Posterior vena cava (tissue), 2 donors: ENCODE measurements at regions of chr5 and their contacts with region 1.

Region 1: GRCh38 chr5:89401659-89402058 is 518.7 kb upstream of the MEF2C start:
- DNase-seq: no peak

Region 2: DNA sequence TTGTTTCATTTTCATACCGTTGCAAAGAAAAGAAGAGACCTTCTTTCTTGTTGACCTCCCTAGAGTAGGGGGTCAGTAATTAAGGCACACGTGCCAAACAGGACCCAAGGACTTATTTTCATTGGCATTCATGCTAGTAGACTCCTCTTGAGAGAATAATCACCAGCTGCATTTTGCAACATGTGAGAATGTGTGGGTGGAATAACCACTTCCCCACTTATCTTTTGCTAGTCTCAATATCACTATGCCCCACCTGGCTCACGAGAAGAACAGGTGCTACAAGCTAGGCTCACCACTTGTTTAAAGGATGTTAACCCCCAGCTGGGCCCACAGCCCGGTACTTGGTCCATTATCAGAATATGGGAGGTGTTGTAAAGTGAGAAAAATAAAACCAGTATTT is 58.0 kb before region 1 on chr5:
- intact Hi-C with region 1: no loop called
- DNase-seq: no peak

Region 3: DNA sequence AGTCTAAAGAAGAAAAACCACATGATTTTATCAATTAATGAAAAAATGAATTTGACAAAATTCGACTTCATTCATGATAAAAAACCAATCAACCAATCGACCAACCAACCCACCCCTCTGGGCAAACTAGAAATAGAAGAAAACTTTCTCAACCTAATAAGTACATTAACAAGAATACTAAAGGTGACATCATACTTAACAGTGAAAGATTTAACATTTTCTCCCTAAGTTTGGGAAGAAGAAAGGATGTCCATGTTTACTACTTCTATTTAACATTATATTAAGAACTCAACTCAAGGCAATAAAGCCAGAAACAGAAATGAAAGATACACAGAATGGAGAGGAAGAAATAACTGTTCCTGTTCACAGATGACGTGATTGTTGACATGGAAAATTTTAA is 42.6 kb before region 1 on chr5:
- intact Hi-C with region 1: no loop called
- DNase-seq: no peak

Region 4: GRCh38 chr5:89421035-89421434 is 19.4 kb after region 1 on chr5:
- intact Hi-C with region 1: loop called in 1 of 2 experiments (anchors 2 kb)
- DNase-seq: no peak

Region 5: DNA sequence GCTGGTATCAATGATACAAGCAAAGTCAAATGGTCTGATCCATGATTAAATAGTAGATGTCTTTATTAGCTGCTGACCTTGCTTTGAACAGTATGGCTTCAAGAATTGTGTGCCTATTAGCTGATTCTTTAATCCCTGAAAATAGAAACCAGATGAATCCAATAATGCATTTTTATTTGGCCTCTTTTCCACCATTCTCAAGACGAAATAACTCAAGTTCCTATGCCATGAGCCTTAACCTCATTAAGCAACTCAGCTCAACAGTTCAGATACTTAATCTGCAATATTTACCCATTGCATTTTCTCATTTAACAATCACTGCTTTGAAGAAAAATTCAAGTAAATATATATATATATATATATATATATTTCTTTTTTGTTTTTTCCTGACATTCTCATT is 69.9 kb after region 1 on chr5:
- intact Hi-C with region 1: no loop called
- DNase-seq: no peak

Region 6: DNA sequence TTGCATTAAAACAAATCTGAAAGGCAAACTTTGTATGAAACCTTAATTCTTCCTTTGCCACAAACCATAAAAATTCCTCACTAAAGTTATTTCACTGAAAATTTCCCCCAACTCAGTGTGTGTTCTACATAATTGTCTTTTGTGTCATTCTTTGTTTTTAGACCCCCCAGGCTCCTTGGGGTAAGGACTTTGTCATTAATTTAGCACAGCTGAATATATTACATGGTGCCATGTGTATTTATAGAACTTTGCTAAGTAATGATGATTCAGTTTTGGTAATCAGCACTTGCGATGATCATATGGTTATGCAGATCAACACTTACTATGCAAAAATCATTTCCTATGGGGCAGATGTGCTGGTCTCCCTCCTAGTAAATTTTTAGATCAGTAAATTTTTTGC is 193.4 kb after region 1 on chr5:
- intact Hi-C with region 1: no loop called
- DNase-seq: no peak